Adrenal gland (tissue), 19 donors: ENCODE measurements at regions of chr2 and their contacts with region 1.

Region 1: GRCh38 chr2:136162438-136162837 is 44.5 kb upstream of the CXCR4 start:
- DNase-seq: no peak
- H3K4me3 ChIP-seq: no peak overlapping the region
- H3K27ac ChIP-seq: no peak overlapping the region
- H3K4me1 ChIP-seq: no peaks in the 10 kb centered on the region
- H3K27me3 ChIP-seq: no peaks in the 10 kb centered on the region
- CTCF ChIP-seq: no peak
- POLR2A ChIP-seq: no peak

Region 2: GRCh38 chr2:136175868-136176267 is 13.4 kb after region 1 on chr2:
- intact Hi-C with region 1: loop called in 1 of 2 experiments (anchors 2 kb)
- DNase-seq: no peak
- H3K4me3 ChIP-seq: no peak overlapping the region
- H3K27ac ChIP-seq: no peak overlapping the region
- H3K4me1 ChIP-seq: no peaks in the 10 kb centered on the region
- H3K27me3 ChIP-seq: no peaks in the 10 kb centered on the region
- CTCF ChIP-seq: no peak
- POLR2A ChIP-seq: no peak

Region 3: GRCh38 chr2:136434251-136434715 is 271.8 kb after region 1 on chr2:
- intact Hi-C with region 1: no loop called
- DNase-seq: peak in 1 of 7 donors; percentile 9
- H3K4me3 ChIP-seq: no peak overlapping the region
- H3K27ac ChIP-seq: no peak overlapping the region
- H3K4me1 ChIP-seq: no peaks in the 10 kb centered on the region
- H3K27me3 ChIP-seq: no peaks in the 10 kb centered on the region
- CTCF ChIP-seq: no peak
- POLR2A ChIP-seq: no peak